Kidney (tissue), 22 donors: ENCODE measurements at regions of chr12 and their contacts with region 1.

Region 1: DNA sequence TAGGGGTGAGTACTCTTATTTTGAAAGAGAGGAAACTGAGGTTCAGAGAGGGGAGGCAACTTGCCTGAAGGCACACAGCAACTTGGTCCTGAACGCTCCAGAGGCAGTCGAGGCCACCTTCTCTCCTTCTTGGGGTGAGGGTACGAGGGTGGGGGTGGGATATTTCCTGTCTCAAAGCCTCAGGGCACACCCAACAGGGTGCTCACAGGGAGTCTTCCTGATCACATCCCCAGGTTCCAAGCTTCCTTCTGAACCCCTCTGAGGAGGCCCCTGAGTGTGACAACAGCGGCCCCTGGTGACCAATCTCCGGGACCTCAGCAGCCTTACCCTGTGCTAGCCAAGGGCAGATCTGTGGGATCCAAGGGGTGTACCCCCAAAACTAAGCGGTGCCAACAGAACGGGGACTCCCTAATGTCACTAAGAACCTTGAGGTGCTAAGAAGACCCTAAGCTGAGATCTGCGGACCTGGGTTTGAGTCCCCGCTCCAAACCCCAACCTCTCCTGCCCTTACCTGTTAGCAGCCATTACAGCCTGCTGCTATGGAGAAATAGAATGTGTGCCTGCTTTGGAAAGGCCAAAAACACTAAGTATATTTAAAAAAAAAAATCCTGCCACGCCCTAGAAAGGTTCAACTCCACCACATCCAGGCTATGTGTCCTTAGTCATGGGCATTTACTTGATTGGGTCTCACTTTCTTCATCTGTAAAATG is 57.9 kb downstream of the TRPV4 start:
- DNase-seq: peak; percentile 80 to 88 (median 85)
- H3K4me3 ChIP-seq: no peak overlapping the region
- H3K27ac ChIP-seq: no peak overlapping the region
- H3K4me1 ChIP-seq: peaks cover 0 to 10% (median 0%) of the 10 kb centered on the region in 3 donors
- H3K27me3 ChIP-seq: no peaks in the 10 kb centered on the region
- CTCF ChIP-seq: peak; percentile 76

Region 2: DNA sequence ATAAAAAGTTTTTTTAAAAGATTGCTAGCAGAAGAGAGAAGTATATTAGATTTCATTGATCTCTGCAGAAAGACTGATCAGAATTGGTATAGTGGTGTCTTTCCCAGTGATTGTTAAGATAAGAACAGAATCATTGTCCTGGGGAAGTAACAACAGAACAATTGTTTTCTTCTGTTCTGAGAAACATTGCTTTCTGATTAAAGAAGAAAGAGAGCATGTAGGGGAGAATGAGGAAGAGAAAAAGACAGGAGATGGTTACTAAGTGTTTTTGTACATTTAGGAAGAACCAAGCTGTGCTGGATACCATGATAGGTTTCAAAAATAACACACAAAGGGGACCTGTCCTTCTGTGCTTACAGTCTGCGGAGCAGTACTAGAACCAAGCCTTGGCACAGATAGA is 718.0 kb before region 1 on chr12:
- intact Hi-C with region 1: no loop called
- DNase-seq: no peak
- H3K4me3 ChIP-seq: no peak overlapping the region
- H3K27ac ChIP-seq: no peak overlapping the region
- H3K4me1 ChIP-seq: no peaks in the 10 kb centered on the region
- H3K27me3 ChIP-seq: no peaks in the 10 kb centered on the region
- CTCF ChIP-seq: no peak

Region 3: GRCh38 chr12:109523071-109523470 is 252.3 kb before region 1 on chr12:
- intact Hi-C with region 1: loop called (anchors 10 kb)
- DNase-seq: no peak
- H3K4me3 ChIP-seq: no peak overlapping the region
- H3K27ac ChIP-seq: no peak overlapping the region
- H3K4me1 ChIP-seq: no peaks in the 10 kb centered on the region
- H3K27me3 ChIP-seq: no peaks in the 10 kb centered on the region
- CTCF ChIP-seq: no peak

Region 4: DNA sequence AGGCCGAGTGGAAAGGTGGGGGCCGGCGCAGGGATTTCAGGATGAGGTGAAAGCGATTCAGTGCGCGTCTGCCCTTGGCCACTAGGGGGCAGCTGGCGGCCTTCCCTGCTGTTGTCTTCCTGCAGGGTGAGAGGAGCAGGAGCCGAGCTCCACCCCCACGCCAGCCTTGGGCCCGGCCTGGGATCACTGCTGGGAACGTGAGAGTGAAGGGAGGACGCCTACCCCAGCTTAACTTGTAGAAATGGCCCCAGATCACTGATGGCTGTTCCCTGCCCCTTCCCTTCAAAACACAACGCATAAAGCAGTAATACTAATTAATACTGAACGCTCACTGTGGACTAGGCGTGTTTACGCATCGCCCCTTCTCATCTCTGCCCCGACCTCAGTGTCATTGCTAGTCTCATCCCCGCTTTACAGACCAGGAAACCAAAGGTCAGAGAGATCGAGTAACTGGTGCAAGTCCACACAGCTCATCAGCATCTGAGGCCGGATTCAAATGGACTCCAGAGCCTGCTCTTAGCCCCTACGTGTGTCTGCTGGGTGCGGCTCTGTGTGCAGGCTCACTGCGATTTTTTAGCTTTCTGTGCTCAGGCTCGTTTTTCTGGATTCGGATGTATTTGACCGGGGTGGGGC is 177.4 kb before region 1 on chr12:
- intact Hi-C with region 1: loop called (anchors 5 kb)
- DNase-seq: peak; percentile 90 to 94 (median 94)
- H3K4me3 ChIP-seq: peak overlapping the region in 1 of 3 donors; percentile 1
- H3K27ac ChIP-seq: no peak overlapping the region
- H3K4me1 ChIP-seq: peaks cover 0 to 10% (median 5%) of the 10 kb centered on the region in 3 donors
- H3K27me3 ChIP-seq: no peaks in the 10 kb centered on the region
- CTCF ChIP-seq: peak; percentile 93